Natural killer cell (primary cell): ENCODE measurements at regions of chr7 and their contacts with region 1.

Region 1: GRCh38 chr7:5083311-5083711 is 37.7 kb downstream of the RBAK start:
- DNase-seq: no peak
- ATAC-seq: no peak
- H3K4me3 ChIP-seq: no peak overlapping the region
- H3K4me3 Mint-ChIP-seq: no peak overlapping the region
- H3K27ac ChIP-seq: no peak overlapping the region
- H3K27ac Mint-ChIP-seq: no peak overlapping the region
- H3K4me1 ChIP-seq: peaks cover 6% of the 10 kb centered on the region
- H3K4me1 Mint-ChIP-seq: peaks cover 0 to 4% of the 10 kb centered on the region in 2 donors
- H3K27me3 ChIP-seq: no peaks in the 10 kb centered on the region
- H3K27me3 Mint-ChIP-seq: peaks cover 0 to 7% of the 10 kb centered on the region in 2 donors
- CTCF ChIP-seq: no peak

Region 2: DNA sequence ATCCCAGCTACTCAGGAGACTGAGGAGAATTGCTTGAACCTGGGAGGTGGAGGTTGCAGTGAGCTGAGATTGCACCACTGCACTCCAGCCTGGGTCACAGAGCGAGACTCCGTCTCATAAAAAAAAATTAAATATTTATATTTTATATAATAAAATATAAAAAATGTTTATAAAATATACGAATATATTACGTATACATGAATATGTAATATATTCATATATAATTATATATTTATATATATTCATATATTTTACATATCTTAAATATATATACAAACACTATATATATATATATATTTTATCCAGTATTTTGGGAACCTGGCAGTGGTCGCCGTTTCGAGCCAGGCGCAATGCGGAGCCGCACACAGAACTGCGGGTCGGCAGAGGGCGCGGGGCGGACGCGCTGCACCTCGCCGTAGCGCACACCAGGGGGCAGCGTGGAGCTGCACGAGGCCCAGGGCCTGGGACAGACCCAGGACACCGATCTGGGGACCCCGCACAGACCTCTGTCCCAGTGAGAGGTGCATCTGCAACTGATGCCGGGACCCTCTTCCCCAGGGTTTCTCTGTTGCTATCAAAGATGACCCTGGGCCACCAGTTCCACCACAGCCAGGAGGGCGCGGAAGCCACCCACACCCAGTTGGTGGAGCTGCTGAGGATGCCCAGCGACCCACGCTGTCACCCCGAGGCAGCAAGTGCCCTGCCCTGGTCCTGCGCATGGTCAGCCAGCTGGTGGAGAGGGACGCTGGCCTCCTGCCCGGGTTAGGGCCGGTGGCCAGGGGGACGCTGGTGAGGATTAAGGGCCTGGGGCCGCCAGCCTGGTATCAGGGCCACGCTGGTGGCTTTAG is 285.2 kb before region 1 on chr7:
- intact Hi-C with region 1: loop called (anchors 2 kb)
- DNase-seq: peak; percentile 63 to 81
- ATAC-seq: peak; percentile 84 to 98 (median 93)
- H3K4me3 ChIP-seq: no peak overlapping the region
- H3K4me3 Mint-ChIP-seq: no peak overlapping the region
- H3K27ac ChIP-seq: no peak overlapping the region
- H3K27ac Mint-ChIP-seq: no peak overlapping the region
- H3K4me1 ChIP-seq: peaks cover 5% of the 10 kb centered on the region
- H3K4me1 Mint-ChIP-seq: peaks cover 6 to 11% of the 10 kb centered on the region in 2 donors
- H3K27me3 ChIP-seq: no peaks in the 10 kb centered on the region
- H3K27me3 Mint-ChIP-seq: no peaks in the 10 kb centered on the region
- CTCF ChIP-seq: peak; percentile 85

Region 3: DNA sequence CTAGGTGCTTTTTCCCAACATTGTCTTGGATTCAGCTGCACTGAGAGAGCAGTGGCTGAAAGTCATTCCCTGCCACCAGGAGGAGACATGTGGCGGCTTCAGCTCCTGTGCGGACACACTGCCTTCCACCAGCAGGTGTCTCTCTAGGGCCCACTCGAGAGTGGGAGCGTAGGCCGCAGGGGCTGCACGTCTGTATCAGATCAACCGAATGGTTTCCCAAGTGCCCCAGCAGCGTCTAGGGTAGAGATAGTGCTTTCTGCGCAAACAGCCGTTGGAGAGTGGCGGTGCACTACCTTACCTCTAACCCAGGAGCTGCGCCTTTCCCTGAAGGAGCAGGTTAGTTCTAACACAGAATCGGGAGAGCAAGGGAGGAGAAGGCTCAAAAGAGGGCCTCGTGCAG is 253.1 kb before region 1 on chr7:
- intact Hi-C with region 1: loop called (anchors 1 kb)
- DNase-seq: peak; percentile 36 to 70
- ATAC-seq: peak; percentile 74 to 93 (median 88)
- H3K4me3 ChIP-seq: no peak overlapping the region
- H3K4me3 Mint-ChIP-seq: no peak overlapping the region
- H3K27ac ChIP-seq: no peak overlapping the region
- H3K27ac Mint-ChIP-seq: no peak overlapping the region
- H3K4me1 ChIP-seq: no peaks in the 10 kb centered on the region
- H3K4me1 Mint-ChIP-seq: peaks cover 0 to 5% of the 10 kb centered on the region in 2 donors
- H3K27me3 ChIP-seq: no peaks in the 10 kb centered on the region
- H3K27me3 Mint-ChIP-seq: peaks cover 0 to 2% of the 10 kb centered on the region in 2 donors
- CTCF ChIP-seq: peak; percentile 40

Region 4: GRCh38 chr7:4973728-4974198 is 109.5 kb before region 1 on chr7:
- intact Hi-C with region 1: loop called (anchors 1 kb)
- DNase-seq: peak; percentile 93 to 97
- ATAC-seq: peak; percentile 94 to 100 (median 97)
- H3K4me3 ChIP-seq: peak overlapping the region; percentile 68
- H3K4me3 Mint-ChIP-seq: peak overlapping the region; percentile 99
- H3K27ac ChIP-seq: peak overlapping the region; percentile 79
- H3K27ac Mint-ChIP-seq: peak overlapping the region; percentile 92 to 99
- H3K4me1 ChIP-seq: peaks cover 16% of the 10 kb centered on the region
- H3K4me1 Mint-ChIP-seq: peaks cover 18 to 24% of the 10 kb centered on the region in 2 donors
- H3K27me3 ChIP-seq: no peaks in the 10 kb centered on the region
- H3K27me3 Mint-ChIP-seq: no peaks in the 10 kb centered on the region
- CTCF ChIP-seq: peak; percentile 74